ENCODE measurements at regions of chr1 and their contacts with region 1.

Region 1: DNA sequence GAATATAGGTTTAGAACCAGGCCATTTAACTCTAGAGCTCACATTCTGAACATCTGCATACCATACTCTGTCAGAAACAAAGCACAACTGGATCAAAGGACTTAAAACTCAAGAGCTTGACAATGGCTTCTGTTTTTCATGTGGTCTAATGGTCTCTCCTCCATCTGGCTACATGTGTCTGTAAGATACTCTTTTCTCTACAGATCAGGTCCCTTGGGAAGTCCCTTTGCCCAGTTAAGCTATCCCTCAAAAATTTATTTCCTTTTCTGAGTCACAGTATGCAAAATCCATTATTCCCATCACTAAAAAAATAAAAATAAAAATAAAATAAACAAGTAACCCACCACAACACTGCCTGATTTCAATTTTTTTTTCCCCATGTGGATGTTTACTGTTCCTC is 357.0 kb upstream of the PRMT6 start:
- DNase-seq: no peak
- ATAC-seq: no peak
- H3K4me3 ChIP-seq: no peak overlapping the region
- H3K27ac ChIP-seq: no peak overlapping the region
- H3K4me1 ChIP-seq: no peaks in the 10 kb centered on the region
- H3K27me3 ChIP-seq: no peaks in the 10 kb centered on the region
- CTCF ChIP-seq: no peak
- POLR2A ChIP-seq: no peak

Region 2: GRCh38 chr1:106473937-106474336 is 225.5 kb before region 1 on chr1:
- in situ Hi-C with region 1: no loop called
- intact Hi-C with region 1: no loop called
- DNase-seq: no peak
- ATAC-seq: no peak
- H3K4me3 ChIP-seq: no peak overlapping the region
- H3K27ac ChIP-seq: no peak overlapping the region
- H3K4me1 ChIP-seq: no peaks in the 10 kb centered on the region
- H3K27me3 ChIP-seq: no peaks in the 10 kb centered on the region
- CTCF ChIP-seq: no peak
- POLR2A ChIP-seq: no peak

Region 3: GRCh38 chr1:106753066-106753465 is 53.6 kb after region 1 on chr1:
- in situ Hi-C with region 1: loop called in 1 of 4 experiments (anchors 5 kb)
- intact Hi-C with region 1: no loop called
- DNase-seq: no peak
- ATAC-seq: no peak
- H3K4me3 ChIP-seq: no peak overlapping the region
- H3K27ac ChIP-seq: no peak overlapping the region
- H3K4me1 ChIP-seq: no peaks in the 10 kb centered on the region
- H3K27me3 ChIP-seq: no peaks in the 10 kb centered on the region
- CTCF ChIP-seq: no peak
- POLR2A ChIP-seq: no peak

Measured in gastrocnemius medialis (tissue), 4 donors.